ENCODE measurements at regions of chr17 and their contacts with region 1.

Region 1: GRCh38 chr17:7056386-7056785 is 12.5 kb upstream of the SLC16A11 start:
- DNase-seq: no peak
- ATAC-seq: no peak
- H3K4me3 ChIP-seq: no peak overlapping the region
- H3K4me3 Mint-ChIP-seq: no peak overlapping the region
- H3K27ac ChIP-seq: no peak overlapping the region
- H3K27ac Mint-ChIP-seq: no peak overlapping the region
- H3K4me1 ChIP-seq: peaks cover 5% of the 10 kb centered on the region
- H3K4me1 Mint-ChIP-seq: peaks cover 4 to 8% of the 10 kb centered on the region in 2 donors
- H3K27me3 ChIP-seq: no peaks in the 10 kb centered on the region
- H3K27me3 Mint-ChIP-seq: peaks cover 7 to 8% of the 10 kb centered on the region in 2 donors
- CTCF ChIP-seq: no peak

Region 2: GRCh38 chr17:7136266-7136877 is 80.0 kb after region 1 on chr17:
- intact Hi-C with region 1: loop called (anchors 1 kb)
- DNase-seq: peak; percentile 71 to 93
- ATAC-seq: peak in 2 of 3 donors; percentile 30 to 46
- H3K4me3 ChIP-seq: no peak overlapping the region
- H3K4me3 Mint-ChIP-seq: no peak overlapping the region
- H3K27ac ChIP-seq: no peak overlapping the region
- H3K27ac Mint-ChIP-seq: no peak overlapping the region
- H3K4me1 ChIP-seq: peaks cover 24% of the 10 kb centered on the region
- H3K4me1 Mint-ChIP-seq: peaks cover 12 to 13% of the 10 kb centered on the region in 2 donors
- H3K27me3 ChIP-seq: peaks cover 3% of the 10 kb centered on the region
- H3K27me3 Mint-ChIP-seq: peaks cover 14 to 24% of the 10 kb centered on the region in 2 donors
- CTCF ChIP-seq: peak; percentile 93

Region 3: GRCh38 chr17:7177196-7177953 is 121.0 kb after region 1 on chr17:
- intact Hi-C with region 1: loop called (anchors 1 kb)
- DNase-seq: peak; percentile 51 to 83
- ATAC-seq: peak; percentile 76 to 91 (median 85)
- H3K4me3 ChIP-seq: no peak overlapping the region
- H3K4me3 Mint-ChIP-seq: no peak overlapping the region
- H3K27ac ChIP-seq: no peak overlapping the region
- H3K27ac Mint-ChIP-seq: no peak overlapping the region
- H3K4me1 ChIP-seq: peaks cover 25% of the 10 kb centered on the region
- H3K4me1 Mint-ChIP-seq: peaks cover 0 to 9% of the 10 kb centered on the region in 2 donors
- H3K27me3 ChIP-seq: peaks cover 18% of the 10 kb centered on the region
- H3K27me3 Mint-ChIP-seq: peaks cover 0 to 13% of the 10 kb centered on the region in 2 donors
- CTCF ChIP-seq: peak; percentile 80